ENCODE measurements at regions of chr4 and their contacts with region 1.

Region 1: DNA sequence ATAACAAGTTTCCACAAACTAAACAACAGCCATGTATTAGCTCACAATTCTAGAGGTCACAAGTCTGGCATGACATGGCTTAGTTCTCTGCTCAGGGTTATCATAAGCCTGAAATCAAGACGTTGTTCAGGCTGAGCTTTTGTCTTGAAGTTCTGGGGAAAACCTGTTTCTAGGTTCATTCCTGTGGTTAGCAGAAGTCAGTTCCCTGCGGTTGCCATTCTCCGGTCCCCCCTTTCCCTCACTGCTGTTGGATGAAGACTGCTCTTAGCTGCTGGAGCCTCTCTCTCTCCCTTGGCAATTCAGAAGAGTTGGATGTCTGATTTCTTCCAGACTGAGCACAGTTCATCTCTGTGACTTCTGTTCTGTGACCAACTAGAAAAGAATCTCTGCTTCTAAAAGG is 962.6 kb downstream of the PCDH7 start:
- DNase-seq: no peak
- ATAC-seq: no peak
- H3K4me3 ChIP-seq: no peak overlapping the region
- H3K4me3 Mint-ChIP-seq: no peak overlapping the region
- H3K27ac ChIP-seq: no peak overlapping the region
- H3K27ac Mint-ChIP-seq: no peak overlapping the region
- H3K4me1 ChIP-seq: no peaks in the 10 kb centered on the region
- H3K4me1 Mint-ChIP-seq: no peaks in the 10 kb centered on the region
- H3K27me3 ChIP-seq: no peaks in the 10 kb centered on the region
- H3K27me3 Mint-ChIP-seq: no peaks in the 10 kb centered on the region
- CTCF ChIP-seq: no peak

Region 2: DNA sequence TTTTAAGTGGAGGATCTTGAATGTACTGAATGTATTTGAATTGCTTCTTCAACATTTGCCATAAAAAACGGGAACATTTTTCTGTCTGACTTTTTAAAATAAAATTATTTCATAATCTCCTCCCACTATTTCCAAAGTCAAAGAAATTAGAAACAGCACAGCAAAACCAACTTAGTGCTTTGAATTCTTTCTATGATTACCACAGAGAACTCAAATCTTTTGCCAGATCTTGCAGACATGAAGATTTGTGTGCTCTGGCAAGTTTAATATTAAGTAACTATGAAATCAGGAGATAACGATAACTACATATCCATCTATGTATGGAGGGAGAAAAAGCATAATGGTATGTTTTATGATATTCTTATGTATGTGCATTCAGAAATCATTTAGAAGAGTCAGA is 19.5 kb after region 1 on chr4:
- CTCF ChIA-PET with region 1: no interaction called
- POLR2A ChIA-PET with region 1: no interaction called
- intact Hi-C with region 1: loop called in 1 of 2 experiments (anchors 1 kb)
- DNase-seq: no peak
- ATAC-seq: no peak
- H3K4me3 ChIP-seq: no peak overlapping the region
- H3K4me3 Mint-ChIP-seq: no peak overlapping the region
- H3K27ac ChIP-seq: no peak overlapping the region
- H3K27ac Mint-ChIP-seq: no peak overlapping the region
- H3K4me1 ChIP-seq: no peaks in the 10 kb centered on the region
- H3K4me1 Mint-ChIP-seq: no peaks in the 10 kb centered on the region
- H3K27me3 ChIP-seq: no peaks in the 10 kb centered on the region
- H3K27me3 Mint-ChIP-seq: no peaks in the 10 kb centered on the region
- CTCF ChIP-seq: no peak